PC-9 (cell line): ENCODE measurements at regions of chr6 and their contacts with region 1.

Region 1: GRCh38 chr6:149979293-149979692 is 15.6 kb downstream of the ULBP1 start:
- DNase-seq: no peak
- H3K4me3 ChIP-seq: no peak overlapping the region
- H3K27ac ChIP-seq: no peak overlapping the region
- H3K4me1 ChIP-seq: peaks cover 5% of the 10 kb centered on the region; the same call in 1 of the 2 replicates
- H3K27me3 ChIP-seq: no peaks in the 10 kb centered on the region
- CTCF ChIP-seq: no peak

Region 2: GRCh38 chr6:149746147-149746946 is 232.9 kb before region 1 on chr6 and contains the start of gene NUP43:
- CTCF ChIA-PET with region 1: no interaction called
- POLR2A ChIA-PET with region 1: interaction called, 13 read pairs
- intact Hi-C with region 1: no loop called
- DNase-seq: peak; percentile 80 to 81
- H3K4me3 ChIP-seq: peak within 1 kb of the TSS; percentile 91
- H3K27ac ChIP-seq: peak within 1 kb of the TSS; percentile 46
- H3K4me1 ChIP-seq: peaks cover 16% of the 10 kb centered on the region
- H3K27me3 ChIP-seq: no peaks in the 10 kb centered on the region
- CTCF ChIP-seq: peak; percentile 61
- total RNA-seq, gene NUP43: 25.1 and 36.2 TPM in 2 replicates